WTC11 (cell line): ENCODE measurements at regions of chr10 and their contacts with region 1.

Region 1: DNA sequence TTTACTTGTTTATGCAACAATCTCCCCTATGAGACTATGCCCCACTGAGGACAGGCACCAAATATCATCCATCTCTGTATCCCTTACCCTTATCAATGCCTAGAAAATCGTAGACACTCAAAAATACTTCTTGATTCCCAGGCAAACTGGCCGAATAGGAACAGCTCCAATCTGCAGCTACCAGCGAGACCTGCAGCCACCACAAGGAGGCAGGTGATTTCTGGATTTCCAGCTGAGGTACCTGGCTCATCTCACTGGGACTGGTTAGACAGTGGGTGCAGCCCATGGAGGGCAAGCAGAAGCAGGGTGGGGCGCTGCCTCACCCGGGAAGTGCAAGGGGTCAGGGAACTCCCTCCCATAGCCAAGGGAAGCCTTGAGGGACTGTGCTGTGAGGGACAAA is 10.8 kb upstream of the PPP1R3C start:
- DNase-seq: peak; percentile 52
- ATAC-seq: no peak; the same call in 1 of the 2 replicates
- H3K4me3 Mint-ChIP-seq: no peak overlapping the region
- H3K27ac Mint-ChIP-seq: no peak overlapping the region
- H3K4me1 Mint-ChIP-seq: no peaks in the 10 kb centered on the region
- H3K27me3 Mint-ChIP-seq: peaks cover 13% of the 10 kb centered on the region
- CTCF ChIP-seq: no peak

Region 2: DNA sequence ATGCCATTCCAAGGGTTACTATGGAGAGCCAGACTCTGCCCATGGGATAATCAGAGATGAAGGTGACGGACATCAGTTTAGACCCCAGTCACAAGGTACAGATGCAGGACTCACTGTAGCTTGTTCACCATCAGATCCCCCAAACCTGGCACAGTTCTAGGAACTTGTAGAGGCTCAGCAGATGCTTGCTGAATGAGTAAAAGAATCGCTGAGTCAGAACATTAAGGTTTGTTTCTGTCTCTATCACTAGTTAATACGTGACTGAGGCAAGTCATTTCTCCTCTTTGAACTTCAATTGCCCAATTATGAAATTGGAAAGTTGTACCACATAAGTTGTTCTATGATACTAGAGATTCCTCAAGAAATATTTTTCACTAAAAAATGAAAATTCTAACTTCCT is 75.9 kb before region 1 on chr10:
- CTCF ChIA-PET with region 1: no interaction called
- POLR2A ChIA-PET with region 1: no interaction called
- DNase-seq: no peak
- ATAC-seq: no peak
- H3K4me3 Mint-ChIP-seq: no peak overlapping the region
- H3K27ac Mint-ChIP-seq: no peak overlapping the region
- H3K4me1 Mint-ChIP-seq: peaks cover 6% of the 10 kb centered on the region
- H3K27me3 Mint-ChIP-seq: no peaks in the 10 kb centered on the region
- CTCF ChIP-seq: no peak

Region 3: DNA sequence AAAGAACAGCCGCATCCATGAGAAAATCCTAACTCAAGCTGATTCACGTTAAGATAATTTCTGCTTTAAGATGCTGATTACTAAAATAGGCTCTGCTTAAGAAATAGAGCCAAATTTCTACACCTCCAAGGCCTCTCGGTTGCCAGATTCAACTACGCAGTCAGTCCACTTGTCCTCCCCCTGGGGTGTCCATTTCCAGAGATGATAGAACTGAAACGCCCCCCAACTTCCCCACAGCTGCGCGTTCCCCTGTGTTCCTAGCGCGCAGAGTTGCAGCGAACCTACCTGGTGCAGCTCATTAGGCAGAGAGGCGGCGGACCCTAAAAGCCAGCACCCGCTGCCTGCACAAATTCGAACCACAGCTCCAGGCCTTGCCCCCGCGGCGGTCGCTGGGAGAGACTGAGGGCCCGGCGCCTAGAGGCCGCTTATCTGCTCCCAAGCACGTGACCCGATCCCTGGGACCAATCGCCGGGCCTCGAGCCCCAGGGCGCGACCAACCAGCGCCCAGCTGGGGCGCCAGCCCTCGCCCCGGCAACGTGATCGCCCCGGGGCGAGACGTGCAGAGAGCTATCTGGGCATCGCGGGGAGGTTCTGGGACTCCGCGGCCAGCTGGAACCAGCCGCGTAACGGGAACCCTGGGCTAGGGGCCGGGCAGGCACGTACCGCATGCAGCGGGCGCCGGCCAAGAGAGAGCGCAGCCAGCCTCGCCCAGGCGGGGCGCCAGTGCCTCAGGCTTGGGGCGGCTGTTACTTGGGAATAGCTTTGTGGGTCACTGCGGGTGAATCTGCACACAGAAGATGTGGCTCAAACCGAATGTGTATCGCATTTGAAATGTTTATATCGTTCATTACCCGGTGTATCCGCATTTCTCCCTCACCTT is 10.8 kb before region 1 on chr10 and contains the start of gene PPP1R3C:
- CTCF ChIA-PET with region 1: interaction called, 18 read pairs
- POLR2A ChIA-PET with region 1: no interaction called
- DNase-seq: peak; percentile 85
- ATAC-seq: peak; percentile 90
- H3K4me3 Mint-ChIP-seq: peak within 1 kb of the TSS; percentile 74
- H3K27ac Mint-ChIP-seq: no peak within 1 kb of the TSS
- H3K4me1 Mint-ChIP-seq: peaks cover 13% of the 10 kb centered on the region
- H3K27me3 Mint-ChIP-seq: peaks cover 50% of the 10 kb centered on the region
- CTCF ChIP-seq: no peak
- total RNA-seq, gene PPP1R3C: 1.5 to 3.3 TPM (median 2.8 TPM) in 3 replicates

Region 4: GRCh38 chr10:91694170-91694794 is 50.6 kb after region 1 on chr10:
- CTCF ChIA-PET with region 1: interaction called, 32 read pairs
- POLR2A ChIA-PET with region 1: no interaction called
- DNase-seq: no peak
- ATAC-seq: no peak
- H3K4me3 Mint-ChIP-seq: no peak overlapping the region
- H3K27ac Mint-ChIP-seq: no peak overlapping the region
- H3K4me1 Mint-ChIP-seq: no peaks in the 10 kb centered on the region
- H3K27me3 Mint-ChIP-seq: no peaks in the 10 kb centered on the region
- CTCF ChIP-seq: peak; percentile 70

Region 5: GRCh38 chr10:91745074-91745832 is 101.6 kb after region 1 on chr10:
- CTCF ChIA-PET with region 1: interaction called, 15 read pairs
- POLR2A ChIA-PET with region 1: no interaction called
- DNase-seq: peak; percentile 68
- ATAC-seq: peak; percentile 100
- H3K4me3 Mint-ChIP-seq: peak overlapping the region; percentile 55
- H3K27ac Mint-ChIP-seq: peak overlapping the region; percentile 69; the same call in 1 of the 2 replicates
- H3K4me1 Mint-ChIP-seq: peaks cover 10% of the 10 kb centered on the region
- H3K27me3 Mint-ChIP-seq: peaks cover 13% of the 10 kb centered on the region
- CTCF ChIP-seq: no peak